Tibial artery (tissue), 4 donors: ENCODE measurements at regions of chr7 and their contacts with region 1.

Region 1: DNA sequence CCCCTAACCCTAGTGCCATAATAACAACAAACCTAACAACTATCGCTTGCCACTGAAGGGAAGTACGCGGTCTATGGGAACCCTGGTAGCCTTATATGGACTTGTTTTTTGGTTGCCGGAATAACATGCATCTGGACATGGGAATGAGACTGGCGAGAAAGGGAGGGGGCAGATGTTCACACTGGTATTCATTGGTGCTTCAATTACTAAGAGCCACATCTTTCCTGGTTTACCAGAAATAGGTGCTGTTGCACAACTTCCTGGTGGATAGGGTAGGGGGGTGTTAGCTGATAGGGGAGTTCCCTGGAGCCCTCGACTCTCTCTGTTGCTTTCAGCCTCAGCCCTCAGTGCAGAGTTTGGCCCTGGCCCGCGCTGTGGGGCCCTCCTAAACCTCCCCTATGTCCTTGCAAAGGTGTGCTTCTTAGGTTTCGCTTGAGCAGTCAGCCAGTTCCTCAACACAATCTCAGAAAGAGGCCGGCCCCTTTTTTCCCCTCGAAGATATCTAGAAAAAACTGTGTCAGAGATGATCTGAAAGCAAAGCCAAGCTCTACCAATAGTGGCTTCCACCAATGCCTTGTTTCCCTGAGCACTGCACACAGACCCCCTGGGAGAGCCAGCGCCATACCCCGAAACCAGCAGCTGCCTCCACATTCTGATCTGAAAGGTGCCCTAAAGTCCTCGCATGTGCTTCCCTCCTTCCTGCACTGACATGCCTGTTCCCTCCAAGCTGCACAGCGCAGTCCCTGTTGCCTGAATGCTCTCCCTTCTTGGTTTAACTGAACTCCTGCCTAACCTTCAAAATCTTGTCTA is 13.5 kb downstream of the TBXAS1 start:
- DNase-seq: no peak
- H3K4me3 ChIP-seq: no peak overlapping the region
- H3K27ac ChIP-seq: no peak overlapping the region
- H3K4me1 ChIP-seq: no peaks in the 10 kb centered on the region
- H3K27me3 ChIP-seq: peaks cover 0 to 2% of the 10 kb centered on the region in 2 donors
- CTCF ChIP-seq: no peak

Region 2: DNA sequence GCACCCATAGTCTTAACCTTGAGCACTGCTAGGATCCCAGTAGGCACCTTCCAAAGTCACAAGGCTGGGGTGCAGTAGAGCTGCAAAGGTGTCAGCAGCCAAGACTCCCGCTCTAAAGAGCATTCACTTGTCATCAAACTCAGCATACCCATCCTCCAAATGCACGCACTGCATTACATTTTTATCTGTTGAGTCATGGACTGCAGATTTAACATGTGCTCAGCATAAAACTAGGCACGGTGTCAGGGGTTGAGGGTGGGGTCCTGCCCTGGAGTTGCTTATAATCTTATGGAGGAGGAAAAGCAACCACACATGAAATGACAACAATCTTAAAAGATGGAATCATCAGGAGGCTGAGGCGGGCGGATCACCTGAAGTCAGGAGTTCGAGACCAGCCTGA is 117.6 kb after region 1 on chr7:
- intact Hi-C with region 1: loop called (anchors 10 kb)
- DNase-seq: peak in 1 of 2 donors; percentile 1
- H3K4me3 ChIP-seq: no peak overlapping the region
- H3K27ac ChIP-seq: no peak overlapping the region
- H3K4me1 ChIP-seq: no peaks in the 10 kb centered on the region
- H3K27me3 ChIP-seq: no peaks in the 10 kb centered on the region
- CTCF ChIP-seq: no peak